ENCODE measurements at regions of chr6 and their contacts with region 1.

Region 1: DNA sequence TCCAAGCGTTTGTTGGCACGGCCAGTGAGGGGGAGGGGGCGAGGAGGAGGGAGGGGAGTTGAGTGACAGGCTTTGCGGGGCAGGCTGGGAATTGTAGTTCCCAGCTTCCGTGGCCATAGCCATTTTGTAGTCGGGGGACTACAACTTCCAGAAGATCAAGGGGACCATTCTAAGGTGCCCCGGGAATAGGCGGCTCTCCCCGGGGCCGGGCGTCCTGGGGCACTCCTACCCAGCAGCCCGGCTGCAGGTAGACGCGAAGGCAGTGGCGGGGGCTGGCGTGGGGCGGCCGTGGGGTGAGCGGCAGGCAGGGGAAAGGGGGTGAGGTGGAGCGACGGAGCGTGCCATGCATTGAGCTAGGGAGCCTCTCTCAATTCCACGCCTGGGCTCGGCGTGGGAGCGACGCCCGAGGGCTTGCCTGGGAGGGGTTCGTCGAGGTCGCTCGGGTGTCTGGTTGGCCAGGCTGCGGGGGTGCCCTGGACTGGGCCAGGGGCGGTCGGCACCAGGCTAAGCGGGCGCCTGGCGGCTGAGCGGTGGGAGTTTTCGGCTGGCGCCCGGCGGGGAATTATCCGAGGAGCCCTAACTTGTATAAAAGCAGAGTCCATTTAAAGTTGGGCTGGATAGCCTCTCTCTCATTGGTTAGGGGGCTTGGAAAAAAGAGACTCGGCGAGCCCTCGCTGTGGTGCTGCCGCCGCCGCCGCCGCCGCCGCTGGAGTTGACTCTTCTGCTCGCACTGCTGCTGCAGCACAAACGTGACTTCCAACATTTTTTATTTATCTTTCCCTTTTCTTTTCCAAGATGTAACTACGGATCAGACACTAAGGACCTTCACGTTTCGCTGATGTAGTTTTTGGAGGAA is at the start of gene JARID2:
- DNase-seq: peak; percentile 86 to 97 (median 94)
- ATAC-seq: peak; percentile 66
- H3K4me3 ChIP-seq: peak within 1 kb of the TSS; percentile 93
- H3K4me3 Mint-ChIP-seq: peak within 1 kb of the TSS; percentile 94 to 100 (median 99)
- H3K27ac ChIP-seq: peak within 1 kb of the TSS; percentile 93
- H3K27ac Mint-ChIP-seq: peak within 1 kb of the TSS; percentile 94 to 99 (median 97)
- H3K4me1 ChIP-seq: peaks cover 8 to 10% of the 10 kb centered on the region in 2 donors
- H3K4me1 Mint-ChIP-seq: peaks cover 13 to 39% (median 26%) of the 10 kb centered on the region in 7 donors
- H3K27me3 ChIP-seq: no peaks in the 10 kb centered on the region
- H3K27me3 Mint-ChIP-seq: peaks cover 0 to 2% (median 0%) of the 10 kb centered on the region in 5 donors
- total RNA-seq, gene JARID2: 23.4 to 39.6 (median 29.9) TPM

Region 2: DNA sequence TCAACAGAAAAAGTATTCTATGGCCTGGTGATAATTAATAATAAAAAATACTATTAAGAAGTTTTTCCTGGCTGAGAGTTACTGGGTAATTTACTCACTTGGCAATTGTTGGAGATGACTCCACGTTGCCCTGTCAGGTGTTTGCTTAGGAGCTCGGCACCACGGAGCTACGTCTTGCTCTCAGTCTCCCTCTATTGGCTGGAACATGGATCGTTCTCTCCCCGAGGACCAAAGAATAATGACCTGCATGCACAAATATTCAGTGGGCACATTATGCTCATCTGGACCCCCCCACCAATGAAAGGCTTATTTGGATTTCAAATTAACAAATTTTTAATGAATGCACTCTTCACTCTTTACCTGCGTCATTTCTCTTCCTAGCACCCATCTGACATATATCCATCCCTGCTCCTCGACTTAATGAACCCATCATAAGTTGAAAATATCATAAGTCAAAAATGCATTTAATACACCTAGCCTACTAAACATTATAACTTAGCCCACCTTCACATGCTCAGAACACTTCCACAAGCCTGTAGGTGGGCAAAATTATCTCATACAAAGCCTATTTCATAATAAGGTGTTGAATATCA is 1199.0 kb before region 1 on chr6:
- CTCF ChIA-PET with region 1: no interaction called
- POLR2A ChIA-PET with region 1: no interaction called
- intact Hi-C with region 1: no loop called
- DNase-seq: peak in 6 of 9 donors; percentile 26 to 47 (median 38)
- ATAC-seq: peak; percentile 80
- H3K4me3 ChIP-seq: no peak overlapping the region
- H3K4me3 Mint-ChIP-seq: no peak overlapping the region
- H3K27ac ChIP-seq: no peak overlapping the region
- H3K27ac Mint-ChIP-seq: peak overlapping the region in 1 of 9 donors; percentile 5
- H3K4me1 ChIP-seq: no peaks in the 10 kb centered on the region
- H3K4me1 Mint-ChIP-seq: peaks cover 0 to 4% (median 0%) of the 10 kb centered on the region in 7 donors
- H3K27me3 ChIP-seq: no peaks in the 10 kb centered on the region
- H3K27me3 Mint-ChIP-seq: peaks cover 12 to 48% (median 32%) of the 10 kb centered on the region in 5 donors

Region 3: DNA sequence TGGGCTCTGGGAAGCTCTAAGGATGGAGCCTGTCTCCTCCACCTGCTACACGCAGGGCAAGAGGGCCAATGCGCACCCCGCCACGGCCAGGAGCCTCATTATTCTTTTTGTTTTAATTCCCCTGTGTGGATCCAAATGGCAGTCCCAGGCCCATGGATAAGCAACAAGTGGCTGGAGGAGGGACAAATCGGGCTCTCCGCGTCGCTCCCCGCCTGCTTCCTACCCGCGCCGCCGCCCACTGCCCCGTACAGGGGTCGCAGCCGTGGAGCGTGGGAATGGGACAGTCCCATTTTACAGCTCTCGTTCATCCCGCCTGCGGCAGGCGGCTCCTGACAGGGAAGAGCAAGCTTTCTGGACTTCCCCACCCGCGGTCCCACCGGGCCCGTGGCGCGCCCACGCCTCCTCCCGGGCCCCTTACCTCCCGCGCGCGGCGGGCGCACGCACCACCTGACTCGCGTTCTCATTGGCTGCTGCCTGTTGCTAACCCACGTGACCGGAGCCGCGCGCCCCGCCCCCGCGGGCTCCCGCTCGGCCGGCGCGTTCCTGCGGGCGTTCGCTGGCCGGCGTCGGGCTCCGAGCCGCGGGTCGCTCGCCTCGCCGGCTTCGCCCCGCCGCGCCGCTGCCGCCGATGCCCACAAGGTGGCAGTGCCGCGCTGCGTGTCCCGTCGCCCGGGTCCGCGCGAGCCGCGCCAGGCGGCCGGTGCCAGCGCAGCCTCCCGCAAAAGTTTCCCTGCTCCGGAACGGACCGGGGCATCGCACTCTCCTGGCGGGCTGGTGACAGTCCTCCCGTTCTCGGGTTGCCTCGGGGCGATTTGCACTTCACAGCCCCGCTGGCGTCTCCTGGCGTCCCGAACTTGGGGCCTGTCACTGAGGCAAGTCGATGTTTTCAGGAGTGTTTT is 1034.7 kb before region 1 on chr6:
- CTCF ChIA-PET with region 1: no interaction called
- POLR2A ChIA-PET with region 1: no interaction called
- intact Hi-C with region 1: loop called (anchors 1 kb)
- DNase-seq: peak; percentile 79 to 98 (median 87)
- ATAC-seq: peak; percentile 95
- H3K4me3 ChIP-seq: peak overlapping the region; percentile 73
- H3K4me3 Mint-ChIP-seq: peak overlapping the region; percentile 81 to 90 (median 87)
- H3K27ac ChIP-seq: peak overlapping the region; percentile 65
- H3K27ac Mint-ChIP-seq: peak overlapping the region; percentile 6 to 93 (median 73)
- H3K4me1 ChIP-seq: peaks cover 8 to 14% of the 10 kb centered on the region in 2 donors
- H3K4me1 Mint-ChIP-seq: peaks cover 0 to 15% (median 11%) of the 10 kb centered on the region in 7 donors
- H3K27me3 ChIP-seq: no peaks in the 10 kb centered on the region
- H3K27me3 Mint-ChIP-seq: no peaks in the 10 kb centered on the region

Region 4: DNA sequence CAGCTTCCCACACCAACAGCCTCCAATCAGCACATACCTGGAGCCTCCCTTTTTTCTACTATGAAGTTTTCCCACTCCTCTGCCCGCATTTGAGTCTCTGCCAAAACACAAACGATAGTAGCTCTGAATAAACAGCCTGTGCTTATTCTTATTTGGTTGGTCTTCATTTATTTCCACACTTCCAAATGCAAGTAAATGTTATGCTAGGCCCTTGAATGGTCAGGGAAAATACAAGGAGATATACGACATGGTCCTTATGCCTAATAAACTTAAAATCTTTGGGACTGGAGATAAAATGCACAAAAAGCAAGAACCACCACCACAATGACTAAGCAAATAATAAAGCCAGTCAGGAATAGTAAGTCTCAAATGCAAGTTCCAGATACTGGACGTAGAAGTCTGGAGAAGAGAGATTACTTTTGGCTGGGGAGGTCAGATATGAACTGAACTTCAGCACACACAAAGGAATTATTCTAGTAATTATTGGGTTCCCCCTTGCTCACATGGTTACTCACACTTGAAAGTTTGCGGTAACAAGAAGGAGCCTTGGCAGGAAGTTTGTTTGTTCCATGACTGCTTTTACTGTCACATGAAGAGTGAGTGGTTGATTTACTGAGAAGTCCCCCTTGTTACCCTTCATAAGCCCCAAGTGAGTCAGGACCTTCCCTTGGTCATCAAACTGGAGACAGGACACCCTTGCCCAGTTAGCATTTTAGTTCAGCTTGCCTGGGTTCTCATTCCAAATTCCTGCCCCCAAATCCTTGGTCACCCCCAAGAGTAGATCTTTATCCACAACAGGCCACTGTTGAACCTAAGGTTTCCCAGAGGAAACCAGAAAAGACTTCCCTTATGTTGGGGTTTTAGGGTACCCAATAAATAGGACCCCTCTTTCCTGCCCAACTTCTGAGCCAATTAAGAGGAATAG is 510.9 kb before region 1 on chr6:
- CTCF ChIA-PET with region 1: no interaction called
- POLR2A ChIA-PET with region 1: no interaction called
- intact Hi-C with region 1: loop called (anchors 5 kb)
- DNase-seq: peak in 7 of 9 donors; percentile 20 to 54 (median 44)
- ATAC-seq: peak; percentile 78
- H3K4me3 ChIP-seq: no peak overlapping the region
- H3K4me3 Mint-ChIP-seq: peak overlapping the region in 9 of 10 donors; percentile 23 to 72 (median 52)
- H3K27ac ChIP-seq: no peak overlapping the region
- H3K27ac Mint-ChIP-seq: peak overlapping the region in 8 of 9 donors; percentile 12 to 86 (median 54)
- H3K4me1 ChIP-seq: peaks cover 31 to 34% of the 10 kb centered on the region in 2 donors
- H3K4me1 Mint-ChIP-seq: peaks cover 30 to 84% (median 71%) of the 10 kb centered on the region in 7 donors
- H3K27me3 ChIP-seq: no peaks in the 10 kb centered on the region
- H3K27me3 Mint-ChIP-seq: no peaks in the 10 kb centered on the region

Region 5: DNA sequence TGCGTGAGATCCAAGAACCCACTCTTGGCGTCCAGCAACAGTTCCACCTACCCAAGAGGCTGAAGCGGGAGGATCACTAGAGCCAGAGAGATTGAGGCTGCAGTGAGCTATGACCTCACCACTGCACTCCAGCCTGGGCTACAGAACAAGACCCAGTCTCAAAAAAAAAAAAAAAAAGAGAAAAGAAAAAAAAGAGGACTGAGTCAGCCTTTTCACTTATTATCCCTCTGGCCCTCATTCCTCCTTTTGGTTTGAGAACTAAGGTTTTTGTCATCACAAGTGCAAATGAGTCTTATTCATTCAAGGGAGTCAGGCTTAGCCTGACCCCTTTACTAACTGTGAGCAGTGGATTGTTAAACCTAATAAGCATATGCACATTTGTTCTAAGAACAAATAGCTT is 37.7 kb before region 1 on chr6:
- CTCF ChIA-PET with region 1: no interaction called
- POLR2A ChIA-PET with region 1: no interaction called
- intact Hi-C with region 1: no loop called
- DNase-seq: no peak
- ATAC-seq: no peak
- H3K4me3 ChIP-seq: no peak overlapping the region
- H3K4me3 Mint-ChIP-seq: no peak overlapping the region
- H3K27ac ChIP-seq: no peak overlapping the region
- H3K27ac Mint-ChIP-seq: no peak overlapping the region
- H3K4me1 ChIP-seq: no peaks in the 10 kb centered on the region
- H3K4me1 Mint-ChIP-seq: no peaks in the 10 kb centered on the region
- H3K27me3 ChIP-seq: no peaks in the 10 kb centered on the region
- H3K27me3 Mint-ChIP-seq: no peaks in the 10 kb centered on the region

Region 6: DNA sequence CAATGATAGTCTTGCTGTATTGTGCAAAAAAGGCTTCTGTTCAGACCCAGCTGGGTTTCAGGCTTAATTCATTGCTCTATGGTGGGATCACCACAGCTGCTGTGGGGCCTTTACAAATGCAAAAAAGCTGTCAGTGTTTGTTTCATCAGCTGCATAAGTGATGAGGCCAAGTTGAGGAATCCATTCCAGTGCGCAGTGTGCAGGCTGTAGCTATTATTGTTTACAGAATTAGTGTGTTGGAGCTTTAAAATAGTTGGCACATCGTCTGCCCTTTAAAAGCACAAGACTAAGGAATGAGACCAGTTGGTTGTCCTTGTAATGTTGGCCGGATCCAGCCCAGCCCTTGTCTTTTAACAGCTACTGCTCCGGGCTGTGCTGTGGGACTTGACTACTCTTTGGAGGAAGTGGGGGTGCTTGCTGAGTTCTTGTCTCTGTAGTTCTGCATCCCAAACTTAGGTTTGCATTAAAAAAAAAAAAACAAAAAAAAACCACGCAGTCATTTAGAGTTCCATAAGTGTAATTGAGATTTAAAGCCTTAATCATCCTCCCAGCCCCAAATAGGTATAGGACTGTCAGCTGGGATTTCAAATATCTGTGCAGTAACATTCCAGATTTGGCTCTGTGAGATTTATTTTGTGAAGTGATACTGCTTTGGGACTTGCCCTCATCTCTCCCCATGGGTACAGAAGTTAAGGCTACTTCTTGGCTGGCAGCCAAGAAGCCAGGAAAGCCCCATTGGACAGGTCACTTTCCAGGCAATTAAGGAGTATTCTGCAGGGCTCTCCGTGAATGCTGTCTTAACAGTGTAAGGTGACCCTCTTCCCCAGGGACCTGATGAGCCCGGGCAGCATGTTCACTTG is 19.5 kb after region 1 on chr6:
- CTCF ChIA-PET with region 1: no interaction called
- POLR2A ChIA-PET with region 1: interaction called, 6 read pairs
- intact Hi-C with region 1: loop called (anchors 1 to 2 kb)
- DNase-seq: no peak
- ATAC-seq: no peak
- H3K4me3 ChIP-seq: no peak overlapping the region
- H3K4me3 Mint-ChIP-seq: peak overlapping the region; percentile 26 to 79 (median 68)
- H3K27ac ChIP-seq: no peak overlapping the region
- H3K27ac Mint-ChIP-seq: peak overlapping the region in 4 of 9 donors; percentile 1 to 71 (median 39)
- H3K4me1 ChIP-seq: peaks cover 13 to 52% of the 10 kb centered on the region in 2 donors
- H3K4me1 Mint-ChIP-seq: peaks cover 81 to 98% (median 90%) of the 10 kb centered on the region in 7 donors
- H3K27me3 ChIP-seq: no peaks in the 10 kb centered on the region
- H3K27me3 Mint-ChIP-seq: no peaks in the 10 kb centered on the region

Region 7: GRCh38 chr6:15365273-15365687 is 119.7 kb after region 1 on chr6:
- CTCF ChIA-PET with region 1: interaction called, 4 read pairs
- POLR2A ChIA-PET with region 1: no interaction called
- intact Hi-C with region 1: loop called in 1 of 2 experiments (anchors 1 kb)
- DNase-seq: peak in 8 of 9 donors; percentile 37 to 75 (median 70)
- ATAC-seq: peak; percentile 82
- H3K4me3 ChIP-seq: no peak overlapping the region
- H3K4me3 Mint-ChIP-seq: peak overlapping the region; percentile 46 to 85 (median 75)
- H3K27ac ChIP-seq: no peak overlapping the region
- H3K27ac Mint-ChIP-seq: peak overlapping the region in 8 of 9 donors; percentile 20 to 86 (median 74)
- H3K4me1 ChIP-seq: peaks cover 17 to 29% of the 10 kb centered on the region in 2 donors
- H3K4me1 Mint-ChIP-seq: peaks cover 0 to 35% (median 26%) of the 10 kb centered on the region in 7 donors
- H3K27me3 ChIP-seq: no peaks in the 10 kb centered on the region
- H3K27me3 Mint-ChIP-seq: no peaks in the 10 kb centered on the region

Region 8: DNA sequence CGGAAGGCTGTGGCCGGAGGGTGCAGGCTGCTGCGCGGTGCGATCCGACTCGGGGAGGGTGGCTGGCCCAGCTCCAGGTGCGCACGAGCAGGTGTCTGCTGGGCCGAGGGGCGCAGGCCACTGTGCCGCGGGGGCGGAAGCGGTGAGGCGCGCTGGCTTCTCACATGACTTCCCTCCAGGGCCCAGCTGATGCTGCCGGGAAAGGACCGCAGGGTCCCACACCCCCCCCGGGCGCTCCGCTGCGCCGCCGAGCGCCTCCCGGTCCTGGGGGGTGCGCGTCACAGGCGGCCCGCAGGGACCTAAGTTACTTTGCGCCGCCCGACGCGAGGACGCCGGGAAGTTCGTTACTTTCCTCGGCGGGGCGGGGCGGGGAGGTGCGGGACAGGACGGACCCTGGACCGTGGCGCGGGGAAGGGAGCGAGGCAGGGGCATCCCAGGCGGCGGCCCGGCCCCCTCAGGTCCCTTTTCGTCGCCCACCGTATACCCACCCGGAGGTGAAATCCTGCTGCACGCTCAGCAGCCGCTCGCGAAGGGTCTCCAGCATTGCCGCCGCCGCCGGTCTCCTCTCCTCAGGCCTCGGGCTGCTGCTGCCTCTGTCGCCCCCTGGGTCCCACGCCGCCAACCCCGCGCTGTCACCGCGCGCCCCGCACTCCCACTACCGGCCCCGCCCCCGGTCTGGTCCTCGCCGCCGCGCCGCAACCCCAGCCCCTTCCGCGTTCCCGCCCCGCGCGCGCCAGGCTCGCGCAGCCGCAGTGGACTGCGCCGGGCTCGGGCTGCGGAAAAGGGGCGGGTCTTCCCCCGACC is 416.9 kb after region 1 on chr6 and contains the start of gene DTNBP1:
- CTCF ChIA-PET with region 1: no interaction called
- POLR2A ChIA-PET with region 1: no interaction called
- intact Hi-C with region 1: loop called (anchors 2 to 5 kb)
- DNase-seq: peak; percentile 74 to 93 (median 84)
- ATAC-seq: peak; percentile 90
- H3K4me3 ChIP-seq: peak within 1 kb of the TSS; percentile 82
- H3K4me3 Mint-ChIP-seq: peak within 1 kb of the TSS; percentile 75 to 93 (median 88)
- H3K27ac ChIP-seq: peak within 1 kb of the TSS; percentile 71
- H3K27ac Mint-ChIP-seq: peak within 1 kb of the TSS; percentile 71 to 90 (median 82)
- H3K4me1 ChIP-seq: peaks cover 11 to 20% of the 10 kb centered on the region in 2 donors
- H3K4me1 Mint-ChIP-seq: peaks cover 20 to 47% (median 39%) of the 10 kb centered on the region in 7 donors
- H3K27me3 ChIP-seq: no peaks in the 10 kb centered on the region
- H3K27me3 Mint-ChIP-seq: peaks cover 0 to 20% (median 4%) of the 10 kb centered on the region in 5 donors
- total RNA-seq, gene DTNBP1: 19.8 to 30.8 (median 25.3) TPM

Region 9: DNA sequence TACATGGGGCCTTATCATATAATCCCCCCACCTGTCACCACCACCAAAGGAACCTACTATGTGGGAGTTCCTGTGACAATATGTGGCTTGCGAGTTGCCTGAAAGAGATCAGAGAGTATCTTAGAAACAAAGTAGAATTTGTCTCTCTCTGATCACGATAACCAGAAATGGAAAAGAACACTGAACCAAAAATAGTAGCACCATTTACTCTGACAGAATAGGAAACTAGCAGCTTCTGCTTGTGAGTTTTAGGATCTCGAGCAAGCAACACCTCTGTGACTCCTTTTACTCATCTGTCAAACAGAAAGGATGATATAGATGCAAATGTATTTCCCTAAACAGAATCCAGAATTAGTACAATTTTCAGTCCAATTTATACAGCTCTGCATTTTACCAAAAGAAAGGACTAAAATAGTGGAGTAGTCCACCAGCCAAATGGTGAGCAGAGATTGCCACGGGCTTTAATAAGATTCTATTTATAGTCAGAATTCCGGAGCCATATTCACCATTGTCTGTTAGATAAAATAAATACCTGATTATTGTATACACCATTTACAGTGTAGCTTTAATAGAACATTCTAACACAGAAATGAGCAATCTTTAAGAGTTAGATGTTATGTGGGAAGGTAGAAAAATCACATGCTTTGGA is 1836.4 kb after region 1 on chr6:
- CTCF ChIA-PET with region 1: no interaction called
- POLR2A ChIA-PET with region 1: no interaction called
- intact Hi-C with region 1: no loop called
- DNase-seq: no peak
- ATAC-seq: no peak
- H3K4me3 ChIP-seq: no peak overlapping the region
- H3K4me3 Mint-ChIP-seq: no peak overlapping the region
- H3K27ac ChIP-seq: no peak overlapping the region
- H3K27ac Mint-ChIP-seq: no peak overlapping the region
- H3K4me1 ChIP-seq: no peaks in the 10 kb centered on the region
- H3K4me1 Mint-ChIP-seq: no peaks in the 10 kb centered on the region
- H3K27me3 ChIP-seq: no peaks in the 10 kb centered on the region
- H3K27me3 Mint-ChIP-seq: peaks cover under 1 to 20% (median 7%) of the 10 kb centered on the region in 5 donors

Measured in naive thymus-derived CD4-positive, alpha-beta T cell (primary cell).